T-cell (primary cell): ENCODE measurements at regions of chr5 and their contacts with region 1.

Region 1: DNA sequence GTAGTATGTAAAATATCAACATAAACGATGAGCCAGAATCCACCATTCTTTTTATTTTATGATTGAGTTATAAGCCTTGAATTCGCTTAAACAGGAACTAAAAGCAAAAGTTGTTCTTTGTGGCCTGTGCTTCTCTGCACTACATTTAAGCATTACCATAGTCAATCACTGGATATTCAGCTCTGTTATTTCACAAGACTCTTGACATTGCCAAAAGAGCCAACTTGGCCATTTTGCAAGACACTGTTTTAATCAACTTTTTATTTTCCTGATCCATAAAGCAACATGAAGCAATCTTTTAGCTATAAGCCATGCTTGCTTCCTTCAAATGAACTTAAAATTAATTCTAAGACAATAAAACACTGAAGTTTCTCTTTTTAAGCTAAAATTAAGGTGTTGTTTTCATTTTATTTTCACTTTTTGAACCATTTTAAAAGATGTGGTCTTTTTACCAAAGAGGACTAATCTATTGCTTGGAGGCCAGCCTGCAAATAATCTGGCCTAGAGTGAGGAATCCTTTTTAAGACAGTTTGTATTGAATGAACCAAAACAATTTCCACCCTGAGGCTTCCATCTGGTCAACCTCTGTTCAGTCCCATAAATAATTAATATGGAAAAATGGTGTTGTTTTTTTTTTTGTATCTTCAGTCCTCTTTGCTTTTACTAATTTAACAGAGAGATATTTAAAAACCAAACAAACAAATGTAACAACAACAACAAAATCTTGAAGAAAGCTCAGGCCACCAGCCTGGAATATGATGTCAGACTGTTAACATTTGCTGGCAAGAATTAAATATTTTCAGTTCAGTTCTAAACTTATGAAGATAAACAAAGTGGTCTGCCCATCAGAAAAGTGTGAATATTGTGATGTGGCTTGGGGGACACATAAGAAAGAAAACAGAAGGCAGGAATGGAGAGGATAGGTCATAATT is 274.4 kb downstream of the MARCHF11 start:
- DNase-seq: no peak
- ATAC-seq: no peak
- H3K4me3 ChIP-seq: no peak overlapping the region
- H3K4me3 Mint-ChIP-seq: no peak overlapping the region
- H3K27ac ChIP-seq: no peak overlapping the region
- H3K27ac Mint-ChIP-seq: no peak overlapping the region
- H3K4me1 ChIP-seq: no peaks in the 10 kb centered on the region
- H3K4me1 Mint-ChIP-seq: no peaks in the 10 kb centered on the region
- H3K27me3 ChIP-seq: no peaks in the 10 kb centered on the region
- H3K27me3 Mint-ChIP-seq: no peaks in the 10 kb centered on the region

Region 2: GRCh38 chr5:15734058-15734457 is 171.1 kb before region 1 on chr5:
- CTCF ChIA-PET with region 1: no interaction called
- POLR2A ChIA-PET with region 1: interaction called in 1 of 2 experiments, 10 read pairs
- DNase-seq: no peak
- ATAC-seq: no peak
- H3K4me3 ChIP-seq: no peak overlapping the region
- H3K4me3 Mint-ChIP-seq: no peak overlapping the region
- H3K27ac ChIP-seq: no peak overlapping the region
- H3K27ac Mint-ChIP-seq: no peak overlapping the region
- H3K4me1 ChIP-seq: no peaks in the 10 kb centered on the region
- H3K4me1 Mint-ChIP-seq: no peaks in the 10 kb centered on the region
- H3K27me3 ChIP-seq: no peaks in the 10 kb centered on the region
- H3K27me3 Mint-ChIP-seq: no peaks in the 10 kb centered on the region

Region 3: DNA sequence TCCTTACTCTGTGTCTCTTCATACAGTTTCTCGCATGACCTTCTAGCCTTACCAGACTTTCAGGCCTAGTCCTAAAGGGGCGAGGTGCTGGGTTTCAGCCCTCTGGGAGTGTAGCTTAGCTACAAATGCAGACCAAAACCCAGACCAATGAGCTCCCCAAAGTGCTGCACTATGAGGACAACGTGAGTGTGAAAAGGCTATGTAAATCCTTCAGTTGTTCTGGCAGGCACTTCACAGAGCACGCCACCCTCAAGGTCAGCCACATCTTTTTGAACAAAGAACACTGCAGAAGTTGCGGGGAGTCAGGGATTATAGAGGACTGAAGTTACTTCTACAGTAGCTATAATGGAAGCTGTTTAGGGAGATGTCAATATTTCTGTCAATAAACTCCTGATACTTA is 27.3 kb before region 1 on chr5:
- CTCF ChIA-PET with region 1: no interaction called
- POLR2A ChIA-PET with region 1: no interaction called
- DNase-seq: no peak
- ATAC-seq: no peak
- H3K4me3 ChIP-seq: no peak overlapping the region
- H3K4me3 Mint-ChIP-seq: no peak overlapping the region
- H3K27ac ChIP-seq: no peak overlapping the region
- H3K27ac Mint-ChIP-seq: no peak overlapping the region
- H3K4me1 ChIP-seq: no peaks in the 10 kb centered on the region
- H3K4me1 Mint-ChIP-seq: no peaks in the 10 kb centered on the region
- H3K27me3 ChIP-seq: no peaks in the 10 kb centered on the region
- H3K27me3 Mint-ChIP-seq: no peaks in the 10 kb centered on the region

Region 4: DNA sequence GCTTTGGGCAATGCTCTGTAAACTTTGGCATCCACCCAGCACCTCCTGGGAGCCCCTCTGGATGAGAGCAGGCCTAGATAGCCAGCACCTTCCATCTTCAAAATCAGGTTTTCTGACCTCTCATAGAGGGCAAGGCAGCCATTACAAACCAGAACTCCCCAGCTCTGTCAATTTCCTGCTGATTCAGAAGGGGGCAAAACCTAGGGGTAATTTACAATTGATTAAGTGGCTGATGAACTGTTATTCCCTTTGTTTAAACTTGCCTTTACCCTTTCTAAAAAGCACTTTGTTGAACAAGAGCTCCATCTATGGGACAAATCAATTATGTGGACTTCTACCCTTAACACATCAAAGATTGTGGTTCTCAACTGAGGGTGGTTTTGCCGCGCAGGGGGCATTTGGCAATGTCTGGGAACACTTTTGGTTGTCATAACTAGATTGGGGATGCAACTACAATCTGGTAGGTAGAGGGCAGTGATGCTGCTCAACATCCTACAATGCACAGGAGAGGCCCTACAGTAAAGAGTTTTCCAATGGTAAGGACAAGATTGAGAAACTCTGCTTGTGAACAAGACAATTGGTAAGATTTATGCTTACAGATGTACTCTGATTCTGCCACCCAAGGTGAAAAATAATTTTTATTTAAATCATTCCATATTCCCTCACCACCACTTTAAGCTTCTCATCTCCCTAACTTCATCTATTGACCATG is 90.3 kb after region 1 on chr5:
- CTCF ChIA-PET with region 1: no interaction called
- POLR2A ChIA-PET with region 1: no interaction called
- DNase-seq: no peak
- ATAC-seq: no peak
- H3K4me3 ChIP-seq: no peak overlapping the region
- H3K4me3 Mint-ChIP-seq: no peak overlapping the region
- H3K27ac ChIP-seq: no peak overlapping the region
- H3K27ac Mint-ChIP-seq: no peak overlapping the region
- H3K4me1 ChIP-seq: no peaks in the 10 kb centered on the region
- H3K4me1 Mint-ChIP-seq: no peaks in the 10 kb centered on the region
- H3K27me3 ChIP-seq: no peaks in the 10 kb centered on the region
- H3K27me3 Mint-ChIP-seq: no peaks in the 10 kb centered on the region